Activated T-helper 2 cell treated with anti-CD3 and anti-CD28 coated beads, Interferon-gamma antibody, Interleukin-2, Interleukin-4, amounts not matched to agents 10 μg/mL and 5 μg/mL and 100 μg/mL, durations not matched to agents 14 hours and 24 hours and 36 hours (primary cell): ENCODE measurements at regions of chr13 and their contacts with region 1.

Region 1: GRCh38 chr13:97030705-97031452 is 36.6 kb upstream of the OXGR1 start:
- DNase-seq: no peak
- H3K4me3 Mint-ChIP-seq: no peak overlapping the region
- H3K27ac Mint-ChIP-seq: no peak overlapping the region
- H3K4me1 Mint-ChIP-seq: no peaks in the 10 kb centered on the region
- H3K27me3 Mint-ChIP-seq: peaks cover 2% of the 10 kb centered on the region

Region 2: GRCh38 chr13:97212601-97213040 is 181.7 kb after region 1 on chr13:
- intact Hi-C with region 1: loop called (anchors 5 kb)
- DNase-seq: no peak
- H3K4me3 Mint-ChIP-seq: no peak overlapping the region
- H3K27ac Mint-ChIP-seq: no peak overlapping the region
- H3K4me1 Mint-ChIP-seq: peaks cover 58% of the 10 kb centered on the region
- H3K27me3 Mint-ChIP-seq: peaks cover 2% of the 10 kb centered on the region